HEK293 (cell line): ENCODE measurements at regions of chr12 and their contacts with region 1.

Region 1: GRCh38 chr12:76586764-76587395 is 27.3 kb upstream of the OSBPL8 start:
- H3K4me3 ChIP-seq: no peak overlapping the region
- H3K27ac ChIP-seq: no peak overlapping the region
- H3K4me1 ChIP-seq: no peaks in the 10 kb centered on the region
- CTCF ChIP-seq: peak; percentile 23; the same call in 1 of the 2 replicates

Region 2: GRCh38 chr12:76544601-76545261 is 42.1 kb before region 1 on chr12:
- CTCF ChIA-PET with region 1: interaction called, 11 read pairs
- POLR2A ChIA-PET with region 1: no interaction called
- H3K4me3 ChIP-seq: no peak overlapping the region
- H3K27ac ChIP-seq: no peak overlapping the region
- H3K4me1 ChIP-seq: peaks cover 34% of the 10 kb centered on the region
- CTCF ChIP-seq: no peak